Activated B cell treated with CpG ODN at 0.5 μM for 24 hours (primary cell): ENCODE measurements at regions of chr2 and their contacts with region 1.

Region 1: DNA sequence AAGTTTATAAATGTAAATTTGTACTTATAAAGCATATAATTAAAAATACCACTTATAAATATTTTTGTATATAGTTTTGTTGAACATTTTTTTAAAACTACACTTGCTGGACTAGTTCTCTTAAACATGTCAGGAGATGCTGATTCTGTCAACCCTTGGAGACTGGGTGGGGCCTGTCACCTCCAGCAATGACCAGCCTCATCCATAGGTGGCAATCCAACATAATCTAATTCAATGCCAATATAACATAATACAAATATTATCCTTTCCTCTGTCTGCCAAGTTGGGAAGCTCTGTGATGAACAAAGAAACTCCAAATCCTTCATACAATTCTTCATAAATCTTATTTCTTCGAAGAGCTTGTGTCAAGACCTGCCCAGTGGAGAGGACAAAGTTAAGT is 140.4 kb downstream of the RBMS1 start:
- DNase-seq: no peak
- ATAC-seq: peak; percentile 70
- H3K4me3 Mint-ChIP-seq: no peak overlapping the region
- H3K27ac Mint-ChIP-seq: no peak overlapping the region
- H3K4me1 Mint-ChIP-seq: peaks cover 10% of the 10 kb centered on the region
- H3K27me3 Mint-ChIP-seq: no peaks in the 10 kb centered on the region
- CTCF ChIP-seq: no peak

Region 2: GRCh38 chr2:160375802-160376469 is 22.8 kb after region 1 on chr2:
- CTCF ChIA-PET with region 1: interaction called, 12 read pairs
- POLR2A ChIA-PET with region 1: no interaction called
- intact Hi-C with region 1: no loop called
- DNase-seq: no peak
- ATAC-seq: peak; percentile 42
- H3K4me3 Mint-ChIP-seq: no peak overlapping the region
- H3K27ac Mint-ChIP-seq: no peak overlapping the region
- H3K4me1 Mint-ChIP-seq: peaks cover 75% of the 10 kb centered on the region
- H3K27me3 Mint-ChIP-seq: no peaks in the 10 kb centered on the region
- CTCF ChIP-seq: no peak

Region 3: GRCh38 chr2:160695402-160696086 is 342.4 kb after region 1 on chr2:
- CTCF ChIA-PET with region 1: no interaction called
- POLR2A ChIA-PET with region 1: interaction called, 11 read pairs
- intact Hi-C with region 1: no loop called
- DNase-seq: no peak
- ATAC-seq: no peak
- H3K4me3 Mint-ChIP-seq: no peak overlapping the region
- H3K27ac Mint-ChIP-seq: no peak overlapping the region
- H3K4me1 Mint-ChIP-seq: no peaks in the 10 kb centered on the region
- H3K27me3 Mint-ChIP-seq: peaks cover 3% of the 10 kb centered on the region
- CTCF ChIP-seq: no peak

Region 4: DNA sequence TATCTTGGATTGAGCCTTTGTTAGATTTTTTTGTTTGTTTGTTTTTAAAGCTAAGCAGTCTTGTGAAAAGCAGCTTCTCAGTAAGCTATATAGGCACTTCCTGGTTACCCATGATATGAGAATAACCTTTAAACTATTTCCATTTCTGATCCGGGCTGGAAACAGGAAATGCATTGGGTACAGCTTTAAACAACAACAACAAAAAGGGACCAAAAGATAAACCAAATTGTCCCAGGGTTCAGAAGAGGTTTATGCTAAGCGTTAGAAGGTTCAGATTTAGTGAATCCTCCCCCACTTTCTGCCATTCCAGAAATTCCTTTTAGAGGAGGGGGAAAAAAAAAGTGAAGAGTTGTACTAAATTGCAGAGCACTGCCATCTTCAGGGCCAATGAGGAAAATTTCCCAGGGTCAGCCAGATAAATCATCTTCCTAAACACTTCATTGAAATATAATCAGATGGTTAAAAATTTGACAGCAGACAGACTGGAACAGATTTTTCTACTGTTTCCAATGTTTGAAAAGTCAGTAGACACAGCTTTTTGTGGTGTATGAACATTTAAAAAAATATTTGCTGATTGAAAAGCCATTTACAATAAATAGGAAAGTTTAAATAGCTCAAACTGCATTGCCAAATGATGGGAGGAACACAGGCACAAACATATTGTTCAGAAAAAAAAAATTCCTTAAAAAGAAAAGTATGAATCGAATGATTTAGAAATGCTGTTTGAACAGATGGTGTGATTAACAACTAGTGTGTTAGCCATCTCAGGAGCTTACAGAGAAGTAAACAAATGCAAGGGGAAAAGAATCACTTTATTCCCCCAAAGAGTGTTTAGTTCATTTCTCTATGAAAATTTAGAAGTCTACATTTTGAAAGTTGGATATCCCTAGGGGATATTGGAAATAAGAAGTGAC is 617.1 kb after region 1 on chr2:
- CTCF ChIA-PET with region 1: interaction called, 4 read pairs
- POLR2A ChIA-PET with region 1: no interaction called
- intact Hi-C with region 1: loop called (anchors 1 kb)
- DNase-seq: no peak
- ATAC-seq: no peak
- H3K4me3 Mint-ChIP-seq: no peak overlapping the region
- H3K27ac Mint-ChIP-seq: no peak overlapping the region
- H3K4me1 Mint-ChIP-seq: peaks cover 2% of the 10 kb centered on the region
- H3K27me3 Mint-ChIP-seq: no peaks in the 10 kb centered on the region
- CTCF ChIP-seq: no peak